Psoas muscle (tissue), 8 donors: ENCODE measurements at regions of chr19 and their contacts with region 1.

Region 1: DNA sequence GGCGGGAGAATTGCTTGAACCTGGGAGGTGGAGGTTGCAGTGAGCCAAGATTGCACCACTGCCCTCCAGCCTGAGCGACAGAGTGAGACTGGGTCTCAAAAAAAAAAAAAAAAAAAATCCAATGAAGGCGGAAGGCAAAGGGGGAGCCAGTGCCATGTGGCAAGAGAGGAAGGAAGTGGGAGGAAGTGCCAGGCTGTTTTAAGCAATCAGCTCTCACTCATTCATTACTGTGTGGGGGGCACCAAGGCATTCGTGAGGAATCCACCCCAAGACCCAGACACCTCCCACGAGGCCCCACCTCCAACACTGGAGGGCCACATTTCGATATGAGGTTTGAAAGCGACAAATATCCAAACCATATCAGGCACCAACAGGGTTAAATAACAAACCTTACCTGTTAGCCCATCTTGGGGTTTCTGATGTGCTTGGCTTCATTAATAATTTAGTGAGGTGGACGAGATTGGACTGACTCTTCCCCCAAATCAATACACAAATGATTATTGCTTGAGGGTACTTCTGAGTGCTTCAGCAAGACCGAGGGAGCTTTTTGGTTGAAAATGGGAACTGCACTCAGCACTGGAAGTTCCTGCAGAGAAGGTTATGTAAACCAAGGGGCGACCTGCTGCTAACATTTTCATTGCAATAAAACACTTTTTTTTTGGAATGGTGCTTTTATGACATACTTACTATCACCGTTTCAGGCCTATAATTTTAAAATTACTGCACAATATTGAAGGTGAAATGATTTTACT is 7.5 kb upstream of the LRP3 start:
- DNase-seq: peak in 1 of 2 donors; percentile 14
- ATAC-seq: no peak
- H3K4me3 ChIP-seq: no peak overlapping the region
- H3K27ac ChIP-seq: no peak overlapping the region
- H3K4me1 ChIP-seq: peaks cover 3% of the 10 kb centered on the region
- H3K27me3 ChIP-seq: no peaks in the 10 kb centered on the region
- CTCF ChIP-seq: no peak

Region 2: DNA sequence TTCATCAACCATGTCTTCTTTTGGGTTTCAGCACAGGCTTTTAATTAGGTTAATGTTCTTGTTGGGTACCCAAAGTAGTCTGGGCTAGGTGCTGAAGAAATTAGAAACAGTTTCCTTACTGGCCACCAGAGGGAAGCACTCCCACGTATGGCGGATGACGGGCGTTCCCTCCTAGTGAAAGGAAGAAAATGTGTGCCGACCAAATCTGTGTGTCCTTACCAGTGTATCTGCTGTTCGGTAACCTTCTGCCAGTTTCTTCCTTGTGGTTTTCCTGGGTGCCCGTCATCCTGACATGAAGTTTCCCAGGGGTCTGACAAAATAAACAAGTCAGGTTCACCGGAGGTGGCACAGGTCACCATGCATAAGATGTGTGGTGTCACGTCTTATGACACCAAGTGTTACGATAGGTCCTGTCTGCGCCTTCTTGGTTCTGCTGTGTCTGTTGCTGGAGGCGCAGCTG is 60.6 kb before region 1 on chr19:
- intact Hi-C with region 1: loop called in 1 of 2 experiments (anchors 5 kb)
- DNase-seq: peak in 1 of 2 donors; percentile 61
- ATAC-seq: peak; percentile 68 to 89 (median 77)
- H3K4me3 ChIP-seq: no peak overlapping the region
- H3K27ac ChIP-seq: no peak overlapping the region
- H3K4me1 ChIP-seq: no peaks in the 10 kb centered on the region
- H3K27me3 ChIP-seq: no peaks in the 10 kb centered on the region
- CTCF ChIP-seq: peak; percentile 78

Region 3: DNA sequence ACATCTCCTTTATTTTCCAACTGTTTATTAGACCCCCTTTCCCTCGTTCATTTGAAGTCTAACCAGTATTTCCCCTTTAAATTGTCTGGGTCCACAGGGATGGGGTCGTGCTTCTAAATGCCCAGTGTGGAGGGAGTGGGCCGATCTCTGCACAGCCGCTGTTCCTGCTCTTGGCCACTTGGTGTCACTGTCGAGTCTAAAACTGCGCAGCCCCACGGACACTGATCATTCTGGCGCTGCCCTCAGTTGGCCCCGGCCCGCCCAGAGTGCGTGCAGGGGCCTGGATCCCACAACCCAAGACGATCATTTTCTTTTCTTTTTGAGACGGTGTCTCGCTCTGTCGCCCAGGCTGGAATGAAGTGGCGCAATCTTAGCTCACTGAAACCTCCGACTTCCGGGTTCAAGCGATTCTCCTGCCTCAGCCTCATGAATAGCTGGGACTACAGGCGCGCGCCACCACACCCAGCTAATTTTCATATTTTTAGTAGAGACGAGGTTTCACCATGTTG is 42.7 kb before region 1 on chr19:
- intact Hi-C with region 1: loop called (anchors 1 to 2 kb)
- DNase-seq: peak; percentile 64 to 80
- ATAC-seq: peak; percentile 94 to 99 (median 96)
- H3K4me3 ChIP-seq: no peak overlapping the region
- H3K27ac ChIP-seq: no peak overlapping the region
- H3K4me1 ChIP-seq: no peaks in the 10 kb centered on the region
- H3K27me3 ChIP-seq: no peaks in the 10 kb centered on the region
- CTCF ChIP-seq: peak; percentile 90